ENCODE measurements at regions of chr7 and their contacts with region 1.

Region 1: DNA sequence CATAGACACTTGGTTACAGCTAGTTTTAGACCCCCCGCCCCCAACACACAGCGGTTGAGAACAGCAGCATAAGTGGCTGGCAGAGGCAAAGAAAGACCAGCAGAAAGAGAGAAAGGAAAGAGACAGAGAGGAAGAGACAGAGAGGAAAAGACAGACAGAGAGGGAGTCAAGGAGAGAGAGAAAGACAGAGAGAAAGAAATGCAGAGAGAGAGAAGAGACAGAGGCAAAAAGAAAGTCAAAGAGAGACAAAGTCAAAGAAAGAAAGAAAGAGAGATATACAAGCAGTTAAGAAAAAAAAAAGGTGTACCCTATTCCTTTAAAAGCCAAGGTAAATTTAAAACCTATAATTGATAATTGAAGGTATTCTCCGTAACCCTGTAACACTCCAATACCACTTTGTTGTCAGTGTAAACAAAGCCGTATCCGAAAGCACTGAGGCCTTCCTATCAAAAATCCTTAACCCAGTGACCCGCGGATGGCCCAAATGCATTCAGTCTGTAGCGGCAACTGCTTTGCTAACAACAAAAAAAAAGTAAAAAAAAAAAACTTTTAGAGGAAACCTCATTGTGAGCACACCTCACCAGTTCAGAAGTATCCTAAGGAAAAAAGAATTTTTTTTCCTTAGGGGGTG is 11.9 kb upstream of the SLC12A9 start:
- DNase-seq: no peak
- H3K4me3 ChIP-seq: no peak overlapping the region
- H3K27ac ChIP-seq: no peak overlapping the region
- H3K4me1 ChIP-seq: peaks cover 17% of the 10 kb centered on the region
- H3K27me3 ChIP-seq: no peaks in the 10 kb centered on the region
- CTCF ChIP-seq: no peak

Region 2: DNA sequence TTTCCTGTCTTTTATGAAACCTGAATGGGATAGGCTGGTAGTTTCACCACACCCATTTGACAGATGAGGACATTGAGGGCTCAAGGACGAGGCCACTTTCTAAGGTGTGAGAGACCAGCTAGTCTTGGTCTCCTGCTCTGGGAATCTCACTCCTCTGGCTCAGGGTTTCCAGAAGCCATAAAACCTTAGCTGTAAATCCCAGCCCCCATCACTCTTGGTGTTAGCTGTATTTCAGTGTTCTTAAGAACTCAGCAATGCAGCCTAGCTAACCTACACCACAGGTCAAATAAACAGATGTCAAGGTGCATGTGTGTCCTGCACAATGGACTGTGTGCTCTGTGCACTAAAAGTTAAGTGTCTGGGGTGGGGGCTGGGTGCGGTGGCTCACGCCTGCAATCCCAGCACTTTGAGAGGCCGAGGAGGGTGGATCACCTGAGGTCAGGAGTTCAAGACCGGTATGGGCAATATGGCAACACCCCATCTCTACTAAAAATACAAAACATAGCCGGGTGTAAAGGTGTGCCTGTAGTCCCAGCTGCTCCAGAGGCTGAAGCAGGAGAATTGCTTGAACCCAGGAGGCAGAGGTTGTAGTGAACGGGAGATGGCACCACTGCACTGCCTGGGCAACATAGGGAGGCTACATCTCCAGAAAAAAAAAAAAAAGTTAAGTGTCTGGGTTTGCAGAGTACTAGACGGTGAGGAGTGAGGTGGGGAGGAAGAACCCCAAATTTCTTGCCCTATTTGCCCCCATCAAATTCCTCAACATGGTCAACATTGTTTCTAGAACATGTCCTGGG is 120.9 kb before region 1 on chr7:
- dilution Hi-C with region 1: loop called (anchors 10 kb)
- DNase-seq: no peak
- H3K4me3 ChIP-seq: peak overlapping the region in 2 of 3 experiments; percentile 40 to 43
- H3K27ac ChIP-seq: no peak overlapping the region
- H3K4me1 ChIP-seq: peaks cover 4% of the 10 kb centered on the region
- H3K27me3 ChIP-seq: peaks cover 17% of the 10 kb centered on the region
- CTCF ChIP-seq: peak; percentile 62 to 75 (median 69)

Measured in keratinocyte (primary cell).